ENCODE measurements at regions of chr17 and their contacts with region 1.

Region 1: DNA sequence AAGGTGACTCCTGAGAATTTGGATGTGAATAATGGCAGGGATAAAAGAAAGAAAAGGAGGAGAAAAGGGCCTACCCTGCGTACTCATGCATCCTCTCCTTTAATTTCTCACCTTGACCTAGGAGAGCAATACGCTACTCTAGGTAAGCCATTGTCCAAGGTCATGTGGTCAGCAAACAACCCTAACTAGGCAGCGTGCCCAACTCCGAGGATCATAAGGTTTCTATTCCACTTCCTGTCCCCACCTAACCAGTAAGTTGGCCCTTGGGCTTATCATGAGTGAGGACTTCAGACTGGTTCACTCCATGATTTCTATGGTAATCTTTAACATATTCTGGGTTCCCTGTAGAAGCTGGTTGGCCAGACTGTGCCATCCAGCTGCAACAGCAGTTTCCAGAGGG is 315.1 kb upstream of the CCL2 start:
- DNase-seq: no peak
- H3K4me3 ChIP-seq: no peak overlapping the region
- H3K27ac ChIP-seq: no peak overlapping the region
- H3K4me1 ChIP-seq: no peaks in the 10 kb centered on the region
- H3K27me3 ChIP-seq: no peaks in the 10 kb centered on the region; a peak in 1 of 7 replicates
- CTCF ChIP-seq: no peak
- EP300 ChIP-seq: no peak
- POLR2A ChIP-seq: no peak
- RAD21 ChIP-seq: no peak

Region 2: DNA sequence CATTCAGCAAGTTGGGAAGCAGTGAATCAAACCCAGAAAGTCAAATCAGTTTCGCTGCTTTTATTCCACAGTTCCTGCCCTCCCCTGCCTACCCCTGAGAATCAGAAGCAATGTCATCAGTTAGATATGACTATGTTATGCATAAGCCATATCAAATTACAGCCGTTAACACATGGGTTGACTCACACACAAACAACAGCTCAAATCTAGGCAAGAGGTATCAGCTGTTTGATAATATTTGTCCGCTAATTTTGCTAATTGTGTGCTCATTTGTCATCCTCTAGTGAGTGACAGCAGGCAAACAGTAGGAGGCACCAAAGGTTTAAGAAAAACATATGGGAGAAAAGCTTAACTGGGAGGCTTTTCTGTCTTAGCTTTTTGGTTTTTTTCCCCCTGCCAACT is 12.2 kb before region 1 on chr17:
- CTCF ChIA-PET with region 1: interaction called, 94 read pairs
- POLR2A ChIA-PET with region 1: no interaction called
- DNase-seq: no peak
- H3K4me3 ChIP-seq: no peak overlapping the region
- H3K27ac ChIP-seq: no peak overlapping the region
- H3K4me1 ChIP-seq: peaks cover 6 to 29% (median 18%) of the 10 kb centered on the region in 4 experiments
- H3K27me3 ChIP-seq: peaks cover 0 to 2% (median 0%) of the 10 kb centered on the region in 4 experiments; a peak in 1 of 7 replicates
- CTCF ChIP-seq: peak in 2 of 3 experiments; percentile 43 to 50; a peak in 2 of 4 replicates
- EP300 ChIP-seq: no peak
- POLR2A ChIP-seq: no peak
- RAD21 ChIP-seq: peak; percentile 62 to 74

Region 3: DNA sequence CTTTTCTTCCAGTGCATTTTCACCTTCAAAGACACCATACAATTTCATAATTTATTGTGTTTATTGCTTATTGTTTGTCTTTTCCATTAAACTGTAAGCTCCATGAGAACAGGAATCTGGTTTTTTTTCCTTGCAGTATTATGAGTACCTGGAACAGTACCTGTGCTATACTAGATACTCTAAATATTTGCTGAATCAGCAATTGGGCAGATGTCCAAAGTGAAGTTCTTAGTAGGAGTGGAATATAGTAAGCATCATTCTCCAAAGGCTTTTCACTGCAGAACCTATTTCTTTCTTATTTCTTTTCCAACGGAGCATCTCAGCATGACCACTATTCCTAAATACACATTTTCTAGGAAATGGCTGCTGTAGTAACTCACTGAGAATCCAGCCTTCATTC is 46.1 kb after region 1 on chr17:
- CTCF ChIA-PET with region 1: no interaction called
- POLR2A ChIA-PET with region 1: no interaction called
- DNase-seq: no peak
- H3K4me3 ChIP-seq: no peak overlapping the region
- H3K27ac ChIP-seq: no peak overlapping the region
- H3K4me1 ChIP-seq: no peaks in the 10 kb centered on the region
- H3K27me3 ChIP-seq: no peaks in the 10 kb centered on the region
- CTCF ChIP-seq: no peak
- EP300 ChIP-seq: no peak
- POLR2A ChIP-seq: no peak
- RAD21 ChIP-seq: no peak